IMR-90 (cell line): ENCODE measurements at regions of chr11 and their contacts with region 1.

Region 1: DNA sequence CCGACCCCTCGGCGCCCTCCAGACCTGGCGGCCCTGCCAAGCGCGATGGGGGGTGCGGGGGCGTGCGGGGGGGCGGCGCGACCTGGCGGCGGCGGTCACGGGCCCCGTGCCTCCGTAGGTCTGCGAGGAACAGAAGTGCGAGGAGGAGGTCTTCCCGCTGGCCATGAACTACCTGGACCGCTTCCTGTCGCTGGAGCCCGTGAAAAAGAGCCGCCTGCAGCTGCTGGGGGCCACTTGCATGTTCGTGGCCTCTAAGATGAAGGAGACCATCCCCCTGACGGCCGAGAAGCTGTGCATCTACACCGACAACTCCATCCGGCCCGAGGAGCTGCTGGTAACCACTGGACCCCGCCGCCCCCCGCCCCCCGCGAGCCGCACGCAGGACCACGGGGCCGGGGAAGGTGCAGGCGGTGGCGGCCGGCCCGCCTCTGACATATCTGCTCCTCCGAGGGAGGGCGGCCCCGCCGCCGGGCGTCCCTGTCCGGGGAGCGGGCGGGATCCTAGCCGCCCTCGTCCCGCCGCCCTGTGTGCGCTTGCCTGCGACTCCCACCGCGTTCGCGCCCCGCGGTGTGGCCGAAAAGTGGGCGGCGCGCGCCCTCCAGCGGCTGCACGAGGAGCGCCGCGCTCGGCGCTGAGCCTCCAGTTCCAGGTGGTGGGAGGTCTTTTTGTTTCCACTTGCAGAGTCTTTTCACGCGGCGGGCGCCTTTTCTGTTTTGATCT is 2.1 kb downstream of the CCND1 start:
- DNase-seq: peak; percentile 74
- ATAC-seq: peak; percentile 13
- H3K4me3 ChIP-seq: peak overlapping the region; percentile 98
- H3K27ac ChIP-seq: peak overlapping the region; percentile 98
- H3K4me1 ChIP-seq: peaks cover 21% of the 10 kb centered on the region
- H3K27me3 ChIP-seq: no peaks in the 10 kb centered on the region
- CTCF ChIP-seq: peak; percentile 86
- POLR2A ChIP-seq: peak; percentile 61
- RAD21 ChIP-seq: peak; percentile 92

Region 2: GRCh38 chr11:68903288-68904247 is 739.5 kb before region 1 on chr11 and contains the starts of genes IGHMBP2 and MRPL21:
- CTCF ChIA-PET with region 1: no interaction called
- POLR2A ChIA-PET with region 1: no interaction called
- dilution Hi-C with region 1: no loop called
- in situ Hi-C with region 1: no loop called
- intact Hi-C with region 1: loop called (anchors 10 kb)
- DNase-seq: peak; percentile 80
- ATAC-seq: peak; percentile 96
- H3K4me3 ChIP-seq: peak within 1 kb of the TSS; percentile 97
- H3K27ac ChIP-seq: peak within 1 kb of the TSS; percentile 91
- H3K4me1 ChIP-seq: peaks cover 3% of the 10 kb centered on the region; the same call in 1 of the 2 replicates
- H3K27me3 ChIP-seq: no peaks in the 10 kb centered on the region
- CTCF ChIP-seq: no peak
- POLR2A ChIP-seq: peak; percentile 71
- RAD21 ChIP-seq: peak; percentile 28; the same call in 1 of the 2 replicates
- total RNA-seq, gene IGHMBP2: 3.9 and 4.5 TPM in 2 replicates
- total RNA-seq, gene MRPL21: 19.2 and 21.7 TPM in 2 replicates

Region 3: DNA sequence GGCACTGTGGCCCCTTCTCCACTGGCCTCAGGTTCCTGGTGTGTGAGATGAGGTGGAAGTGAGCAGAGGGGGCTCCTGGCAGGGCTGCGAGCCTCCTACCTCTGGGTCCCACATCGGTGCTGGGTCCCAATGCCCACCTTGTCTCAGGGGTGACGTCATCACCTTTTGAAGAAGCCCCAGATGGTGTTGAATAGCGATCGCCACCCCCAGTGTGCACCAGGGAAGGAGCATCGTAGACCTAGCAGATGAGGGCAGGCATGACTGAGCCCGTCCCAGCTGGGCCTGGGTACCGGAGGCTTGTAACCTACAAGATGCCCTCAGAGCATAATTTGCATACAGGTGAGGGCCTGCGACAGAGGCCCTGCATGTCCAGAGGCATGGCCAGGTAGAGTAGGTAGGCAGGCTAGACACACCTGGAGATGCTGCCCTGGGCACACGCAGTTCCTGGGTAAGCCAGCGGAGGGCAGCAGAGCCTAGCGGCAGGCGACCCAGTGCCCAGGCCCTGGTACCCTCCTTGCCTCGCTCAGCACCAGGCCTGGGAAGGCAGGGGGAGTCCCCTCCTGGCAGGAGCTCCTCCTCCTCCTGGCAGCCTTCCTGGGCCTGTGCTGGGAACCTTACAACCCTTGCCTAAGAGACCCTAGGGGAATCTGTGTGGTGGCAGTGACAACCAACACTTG is 541.8 kb before region 1 on chr11:
- CTCF ChIA-PET with region 1: interaction called, 5 read pairs
- POLR2A ChIA-PET with region 1: no interaction called
- dilution Hi-C with region 1: no loop called
- in situ Hi-C with region 1: no loop called
- intact Hi-C with region 1: loop called (anchors 1 kb)
- DNase-seq: peak; percentile 73
- ATAC-seq: peak; percentile 94
- H3K4me3 ChIP-seq: no peak overlapping the region
- H3K27ac ChIP-seq: no peak overlapping the region
- H3K4me1 ChIP-seq: peaks cover 3% of the 10 kb centered on the region; the same call in 1 of the 2 replicates
- H3K27me3 ChIP-seq: no peaks in the 10 kb centered on the region
- CTCF ChIP-seq: peak; percentile 97
- POLR2A ChIP-seq: peak; percentile 52; the same call in 1 of the 2 replicates
- RAD21 ChIP-seq: peak; percentile 99

Region 4: DNA sequence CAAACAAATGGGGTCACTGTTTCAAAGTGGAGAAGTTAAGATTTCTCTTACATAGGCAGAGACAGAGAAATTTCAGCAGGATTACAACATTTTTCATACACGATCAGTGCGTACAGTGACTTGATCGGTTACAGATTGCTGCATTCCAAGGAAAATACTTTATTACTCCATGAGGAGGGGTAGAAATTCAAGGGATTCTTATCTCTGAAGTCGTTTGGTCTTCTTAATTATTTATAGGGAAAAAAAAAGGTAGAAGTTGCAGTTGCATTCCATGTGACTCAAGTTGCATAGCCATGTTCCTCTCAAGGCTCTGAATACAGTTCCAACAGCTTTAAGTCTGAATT is 498.0 kb before region 1 on chr11:
- CTCF ChIA-PET with region 1: no interaction called
- POLR2A ChIA-PET with region 1: no interaction called
- dilution Hi-C with region 1: no loop called
- in situ Hi-C with region 1: no loop called
- intact Hi-C with region 1: loop called (anchors 1 kb)
- DNase-seq: peak; percentile 70
- ATAC-seq: peak; percentile 84
- H3K4me3 ChIP-seq: no peak overlapping the region
- H3K27ac ChIP-seq: peak overlapping the region; percentile 57; the same call in 1 of the 2 replicates
- H3K4me1 ChIP-seq: peaks cover 11% of the 10 kb centered on the region
- H3K27me3 ChIP-seq: no peaks in the 10 kb centered on the region
- CTCF ChIP-seq: peak; percentile 27
- POLR2A ChIP-seq: no peak
- RAD21 ChIP-seq: peak; percentile 15; the same call in 1 of the 2 replicates

Region 5: GRCh38 chr11:69296890-69297786 is 345.9 kb before region 1 on chr11:
- CTCF ChIA-PET with region 1: interaction called, 7 read pairs
- POLR2A ChIA-PET with region 1: interaction called, 11 read pairs
- dilution Hi-C with region 1: no loop called
- in situ Hi-C with region 1: loop called (anchors 5 kb)
- intact Hi-C with region 1: loop called (anchors 1 kb)
- DNase-seq: peak; percentile 99
- ATAC-seq: peak; percentile 59
- H3K4me3 ChIP-seq: no peak overlapping the region
- H3K27ac ChIP-seq: peak overlapping the region; percentile 92
- H3K4me1 ChIP-seq: peaks cover 47% of the 10 kb centered on the region
- H3K27me3 ChIP-seq: no peaks in the 10 kb centered on the region
- CTCF ChIP-seq: no peak
- POLR2A ChIP-seq: no peak
- RAD21 ChIP-seq: peak; percentile 33; the same call in 1 of the 2 replicates

Region 6: DNA sequence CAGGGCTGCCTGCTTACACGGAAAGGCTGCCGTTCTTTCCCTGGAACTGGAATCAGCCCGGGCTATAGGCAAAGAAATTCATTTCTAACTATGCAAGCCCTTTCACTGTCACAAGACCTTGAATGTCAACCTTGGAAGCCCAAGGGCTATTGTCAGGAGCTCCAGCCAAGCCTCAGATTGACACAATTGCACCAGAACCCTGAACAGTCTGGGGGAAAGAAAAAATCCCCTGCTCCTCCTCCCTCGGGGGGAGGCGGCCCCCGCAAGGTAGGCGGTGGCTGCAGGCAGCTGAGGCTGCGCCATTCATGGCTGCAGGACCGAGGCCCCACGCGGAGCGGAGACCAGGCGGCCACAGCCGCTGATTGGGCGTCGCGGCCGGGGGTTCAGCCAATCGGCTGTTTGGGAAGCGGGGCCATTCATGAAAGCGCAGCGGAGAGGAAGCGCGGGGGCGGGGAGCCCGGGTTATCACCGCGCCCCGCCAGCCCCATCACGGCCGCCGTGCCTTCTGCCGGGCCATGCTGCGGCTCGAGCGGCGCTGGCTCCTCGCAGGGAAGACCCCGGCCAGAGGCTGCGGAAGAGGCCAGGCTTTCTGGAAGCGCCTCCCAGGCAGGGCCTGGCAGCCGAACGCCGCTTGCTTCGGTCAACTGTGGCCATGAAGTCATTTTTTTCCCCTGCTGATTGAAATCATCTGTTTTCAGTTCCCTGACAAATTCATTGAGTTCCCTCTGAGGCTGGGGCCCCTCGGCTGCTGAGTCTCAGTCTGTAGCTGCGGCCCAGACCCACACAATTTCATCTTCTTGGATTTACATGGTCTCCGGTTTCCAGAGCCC is 199.7 kb before region 1 on chr11:
- CTCF ChIA-PET with region 1: interaction called, 3 read pairs
- POLR2A ChIA-PET with region 1: no interaction called
- dilution Hi-C with region 1: no loop called
- in situ Hi-C with region 1: loop called (anchors 10 kb)
- intact Hi-C with region 1: loop called (anchors 1 kb)
- DNase-seq: peak; percentile 94
- ATAC-seq: peak; percentile 93
- H3K4me3 ChIP-seq: peak overlapping the region; percentile 36
- H3K27ac ChIP-seq: peak overlapping the region; percentile 95
- H3K4me1 ChIP-seq: peaks cover 27% of the 10 kb centered on the region
- H3K27me3 ChIP-seq: no peaks in the 10 kb centered on the region
- CTCF ChIP-seq: no peak
- POLR2A ChIP-seq: peak; percentile 84
- RAD21 ChIP-seq: no peak; the same call in 1 of the 2 replicates

Region 7: GRCh38 chr11:69670158-69670845 is 27.2 kb after region 1 on chr11:
- CTCF ChIA-PET with region 1: no interaction called
- POLR2A ChIA-PET with region 1: no interaction called
- dilution Hi-C with region 1: no loop called
- in situ Hi-C with region 1: no loop called
- intact Hi-C with region 1: loop called (anchors 1 kb)
- DNase-seq: peak; percentile 84
- ATAC-seq: peak; percentile 69
- H3K4me3 ChIP-seq: no peak overlapping the region
- H3K27ac ChIP-seq: no peak overlapping the region
- H3K4me1 ChIP-seq: peaks cover 7% of the 10 kb centered on the region
- H3K27me3 ChIP-seq: no peaks in the 10 kb centered on the region
- CTCF ChIP-seq: peak; percentile 94
- POLR2A ChIP-seq: peak; percentile 63
- RAD21 ChIP-seq: peak; percentile 94

Region 8: DNA sequence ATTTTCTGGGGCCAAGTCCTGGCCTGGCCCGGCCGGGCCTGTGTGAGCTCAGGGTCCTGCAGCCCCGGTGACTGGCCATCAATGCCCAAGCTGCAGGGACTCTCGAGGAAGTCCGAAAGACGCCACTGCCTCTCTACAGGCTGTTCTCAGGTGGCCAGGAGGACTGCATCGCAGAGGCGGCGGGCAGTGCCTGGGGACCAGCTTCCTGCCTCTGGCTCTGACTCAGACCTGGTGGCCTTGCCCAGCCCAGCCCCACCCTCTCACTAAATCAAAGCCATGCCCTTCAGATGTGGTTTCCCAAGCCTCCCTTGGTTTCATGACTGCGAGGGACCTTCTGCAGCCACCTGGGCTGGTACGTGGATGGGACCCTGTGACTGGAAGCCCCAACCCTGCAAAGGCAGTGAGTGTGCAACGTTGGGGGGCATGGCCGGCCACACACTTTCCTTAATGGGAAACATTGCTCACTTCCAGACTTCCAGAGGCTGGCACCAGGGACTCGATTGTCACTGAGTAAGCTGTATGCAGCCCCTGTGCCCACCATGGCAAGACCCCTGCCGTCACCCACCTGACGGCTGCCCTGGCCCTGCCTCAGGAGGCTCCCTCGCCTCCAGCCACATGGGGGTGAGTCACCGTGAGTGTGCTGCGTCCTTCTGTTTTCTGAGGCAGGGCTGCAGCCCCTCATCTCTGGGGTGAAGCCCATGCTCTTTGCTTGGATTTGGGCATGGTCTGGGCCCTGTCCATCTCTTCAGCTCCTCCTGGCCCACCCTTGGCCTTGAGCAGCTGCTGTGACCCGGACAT is 182.2 kb after region 1 on chr11:
- CTCF ChIA-PET with region 1: no interaction called
- POLR2A ChIA-PET with region 1: no interaction called
- dilution Hi-C with region 1: no loop called
- in situ Hi-C with region 1: no loop called
- intact Hi-C with region 1: no loop called
- DNase-seq: no peak
- ATAC-seq: no peak
- H3K4me3 ChIP-seq: no peak overlapping the region
- H3K27ac ChIP-seq: no peak overlapping the region
- H3K4me1 ChIP-seq: no peaks in the 10 kb centered on the region
- H3K27me3 ChIP-seq: peaks cover 69% of the 10 kb centered on the region
- CTCF ChIP-seq: no peak
- POLR2A ChIP-seq: no peak
- RAD21 ChIP-seq: no peak